ENCODE measurements at regions of chr16 and their contacts with region 1.

Region 1: DNA sequence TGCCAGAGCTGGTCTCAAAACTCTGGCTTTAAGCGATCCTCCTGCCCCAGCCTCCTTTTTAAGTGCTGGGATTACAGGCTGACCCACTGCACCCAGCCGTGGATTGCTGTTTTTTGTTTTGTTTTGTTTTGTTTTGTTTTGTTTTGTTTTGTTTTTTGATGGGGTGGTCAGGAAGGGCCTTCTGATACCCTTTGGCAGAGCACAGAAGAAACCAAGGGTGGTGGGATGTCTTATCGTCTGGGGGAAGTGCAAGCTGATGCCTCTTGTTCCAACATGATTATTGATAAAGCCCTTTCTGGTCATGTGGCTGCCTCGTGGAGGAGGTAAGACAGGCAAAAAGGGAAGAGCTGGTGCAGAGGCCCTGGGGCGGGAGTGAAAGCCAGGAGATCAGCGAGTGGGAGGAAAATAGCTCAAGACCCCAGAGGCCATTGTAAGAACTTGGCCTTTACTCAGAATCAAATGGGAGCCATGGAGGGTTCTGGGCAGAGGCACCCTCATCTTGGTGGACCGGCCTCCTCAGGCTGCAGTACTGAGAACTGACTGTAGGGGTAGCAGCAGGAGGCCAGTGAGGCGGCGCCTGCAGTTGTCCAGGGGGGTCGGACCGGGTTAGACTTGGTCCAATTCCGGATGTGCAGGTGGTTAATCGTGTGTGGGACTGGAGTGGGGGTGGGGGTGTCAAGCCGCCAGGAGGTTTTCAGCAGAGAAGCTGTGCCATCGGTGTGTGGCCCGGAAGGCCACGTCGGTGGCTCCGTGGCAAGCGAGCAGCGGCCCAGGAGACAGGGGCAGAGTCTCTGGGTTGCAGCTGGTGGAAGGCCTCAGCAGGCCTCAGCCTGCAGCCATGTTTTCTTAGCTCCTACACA is 84.4 kb upstream of the GSE1 start:
- DNase-seq: peak in 2 of 3 donors; percentile 40 to 53
- H3K4me3 ChIP-seq: no peak overlapping the region
- H3K27ac ChIP-seq: peak overlapping the region in 1 of 2 experiments; percentile 34
- H3K4me1 ChIP-seq: peaks cover 0 to 41% (median 20%) of the 10 kb centered on the region in 4 experiments
- H3K27me3 ChIP-seq: no peaks in the 10 kb centered on the region

Region 2: GRCh38 chr16:85469929-85470590 is 58.7 kb before region 1 on chr16:
- CTCF ChIA-PET with region 1: no interaction called
- POLR2A ChIA-PET with region 1: no interaction called
- DNase-seq: no peak
- H3K4me3 ChIP-seq: no peak overlapping the region
- H3K27ac ChIP-seq: no peak overlapping the region
- H3K4me1 ChIP-seq: peaks cover 0 to 33% (median 15%) of the 10 kb centered on the region in 4 experiments
- H3K27me3 ChIP-seq: no peaks in the 10 kb centered on the region

Region 3: DNA sequence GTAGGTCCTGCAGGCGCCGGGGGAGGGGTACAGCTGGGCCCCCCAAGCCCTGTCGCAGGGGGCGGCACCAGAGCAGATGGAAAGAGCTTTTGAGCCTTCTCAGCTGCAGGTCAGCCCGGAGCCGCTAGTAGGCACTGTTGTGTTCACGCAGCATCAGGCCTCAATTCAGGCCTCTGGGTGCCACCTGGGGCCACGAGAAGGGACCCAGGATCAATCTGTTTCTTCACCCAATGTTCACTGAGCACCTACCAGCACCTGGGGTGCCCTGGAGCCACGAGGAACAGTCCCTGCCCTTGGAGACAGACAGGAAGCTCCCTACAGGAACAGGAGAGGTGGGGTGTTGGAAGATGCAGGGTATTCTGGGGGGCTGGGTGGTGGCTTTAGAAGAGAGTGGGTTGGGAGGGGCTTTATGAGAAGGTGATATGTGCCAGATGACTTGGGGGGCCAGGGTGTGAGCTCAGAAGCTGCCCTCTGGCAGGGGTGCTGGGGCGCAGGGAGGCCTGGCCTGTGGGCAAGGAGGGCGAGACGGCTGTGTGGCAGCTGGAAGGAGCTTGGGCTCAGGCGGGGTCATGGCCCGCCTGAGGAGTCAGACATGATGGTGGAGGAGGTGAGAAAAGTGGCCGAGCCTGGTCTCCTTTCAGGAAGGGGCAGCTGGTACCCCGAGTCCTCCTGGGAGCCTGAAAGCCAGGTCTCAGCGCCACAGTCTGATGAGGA is 37.5 kb before region 1 on chr16:
- CTCF ChIA-PET with region 1: interaction called, 26 read pairs
- POLR2A ChIA-PET with region 1: no interaction called
- DNase-seq: peak; percentile 33 to 55 (median 34)
- H3K4me3 ChIP-seq: no peak overlapping the region
- H3K27ac ChIP-seq: no peak overlapping the region
- H3K4me1 ChIP-seq: peaks cover 0 to 37% (median 16%) of the 10 kb centered on the region in 4 experiments
- H3K27me3 ChIP-seq: no peaks in the 10 kb centered on the region

Region 4: GRCh38 chr16:85514595-85515318 is 14.0 kb before region 1 on chr16:
- CTCF ChIA-PET with region 1: interaction called, 12 read pairs
- POLR2A ChIA-PET with region 1: interaction called, 3 read pairs
- DNase-seq: no peak
- H3K4me3 ChIP-seq: no peak overlapping the region
- H3K27ac ChIP-seq: no peak overlapping the region
- H3K4me1 ChIP-seq: peaks cover 0 to 3% (median 1%) of the 10 kb centered on the region in 4 experiments
- H3K27me3 ChIP-seq: no peaks in the 10 kb centered on the region

Region 5: GRCh38 chr16:85541980-85542900 is 13.5 kb after region 1 on chr16:
- CTCF ChIA-PET with region 1: interaction called, 35 read pairs
- POLR2A ChIA-PET with region 1: no interaction called
- DNase-seq: no peak
- H3K4me3 ChIP-seq: peak overlapping the region in 1 of 7 experiments; percentile 10
- H3K27ac ChIP-seq: no peak overlapping the region
- H3K4me1 ChIP-seq: peaks cover 13 to 53% (median 43%) of the 10 kb centered on the region in 4 experiments
- H3K27me3 ChIP-seq: no peaks in the 10 kb centered on the region

Region 6: GRCh38 chr16:85564277-85565051 is 35.7 kb after region 1 on chr16:
- CTCF ChIA-PET with region 1: interaction called, 23 read pairs
- POLR2A ChIA-PET with region 1: no interaction called
- DNase-seq: peak; percentile 63 to 72 (median 68)
- H3K4me3 ChIP-seq: no peak overlapping the region
- H3K27ac ChIP-seq: no peak overlapping the region
- H3K4me1 ChIP-seq: peaks cover 0 to 88% (median 81%) of the 10 kb centered on the region in 4 experiments
- H3K27me3 ChIP-seq: no peaks in the 10 kb centered on the region

Region 7: DNA sequence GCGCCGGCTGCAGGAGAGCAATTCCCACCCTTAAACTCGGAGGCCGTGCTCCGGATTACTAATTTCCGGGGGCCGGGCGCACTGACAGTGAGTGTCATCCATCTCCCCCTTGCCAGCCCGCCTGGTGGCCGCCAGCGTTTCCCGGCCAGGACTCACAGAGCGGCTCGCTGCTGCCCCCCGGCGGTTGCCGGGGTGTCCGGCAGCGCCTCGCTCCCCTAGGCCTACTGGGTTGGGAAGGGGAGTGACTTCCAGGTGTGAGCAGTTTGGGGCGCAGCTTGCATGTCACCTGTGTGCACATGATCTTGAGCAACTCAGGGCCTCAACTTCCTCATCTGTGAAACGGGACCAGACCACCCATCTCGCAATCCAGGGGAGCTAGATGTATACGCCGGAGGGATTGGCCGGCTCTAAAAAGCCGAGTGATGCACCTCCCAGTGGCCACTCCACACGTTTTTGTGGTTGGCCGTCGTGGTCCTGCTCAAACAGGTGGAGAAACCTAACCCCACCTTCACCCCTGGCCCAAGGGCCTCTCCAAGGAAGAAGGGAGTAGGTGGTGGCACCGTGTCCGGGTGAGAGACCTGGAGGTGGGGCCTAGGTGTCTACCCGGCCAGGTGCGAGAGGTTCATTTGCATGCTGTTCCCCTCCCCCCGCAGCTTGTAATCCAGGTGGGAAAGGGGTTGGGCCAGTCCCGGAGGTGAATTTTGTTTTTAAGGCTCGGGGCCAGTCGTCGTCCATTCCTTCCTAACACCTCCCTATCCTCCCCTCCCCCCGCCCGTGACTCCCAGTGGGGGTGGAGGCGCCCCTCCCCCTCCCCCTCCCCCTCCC is 82.0 kb after region 1 on chr16:
- CTCF ChIA-PET with region 1: interaction called, 13 read pairs
- POLR2A ChIA-PET with region 1: no interaction called
- DNase-seq: peak; percentile 84 to 88 (median 86)
- H3K4me3 ChIP-seq: peak overlapping the region in 5 of 7 experiments; percentile 36 to 85 (median 65)
- H3K27ac ChIP-seq: peak overlapping the region; percentile 23 to 71
- H3K4me1 ChIP-seq: peaks cover 3 to 73% (median 60%) of the 10 kb centered on the region in 4 experiments
- H3K27me3 ChIP-seq: no peaks in the 10 kb centered on the region

Region 8: DNA sequence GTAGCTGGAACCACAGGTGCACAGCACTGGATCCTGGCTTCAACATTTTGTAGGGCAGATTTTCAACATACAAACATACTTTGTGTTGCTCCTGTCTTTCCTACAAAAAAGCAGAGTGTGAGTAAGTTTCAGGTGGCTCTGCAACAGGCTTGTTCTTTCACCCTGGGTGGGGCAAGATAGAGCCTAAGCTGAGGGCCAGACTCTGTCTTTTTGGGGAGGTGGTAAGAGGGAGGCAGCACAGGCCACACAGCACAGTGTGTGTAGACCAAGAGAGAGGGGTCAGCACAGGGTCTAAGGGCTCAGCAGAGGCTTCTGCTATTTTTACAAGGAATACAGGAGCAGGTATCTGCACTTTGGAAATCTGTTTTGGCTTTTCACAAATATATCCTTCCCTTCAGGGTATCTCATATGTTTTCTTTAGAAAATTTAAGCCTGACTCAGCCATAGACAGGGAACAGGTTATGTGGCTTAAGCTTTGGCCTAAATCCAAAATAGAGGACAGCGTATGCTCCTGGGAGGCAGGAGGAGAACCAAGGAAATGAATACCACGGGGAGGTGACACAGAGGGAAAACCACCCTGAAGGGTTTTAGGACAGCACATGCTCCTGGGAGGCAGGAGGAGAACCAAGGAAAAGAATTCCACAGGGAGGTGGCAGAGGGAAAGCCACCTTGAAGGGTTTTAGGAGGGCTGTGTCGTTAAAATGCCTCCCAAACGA is 249.0 kb after region 1 on chr16:
- CTCF ChIA-PET with region 1: no interaction called
- POLR2A ChIA-PET with region 1: no interaction called
- DNase-seq: no peak
- H3K4me3 ChIP-seq: no peak overlapping the region
- H3K27ac ChIP-seq: peak overlapping the region in 1 of 2 experiments; percentile 20
- H3K4me1 ChIP-seq: no peaks in the 10 kb centered on the region
- H3K27me3 ChIP-seq: no peaks in the 10 kb centered on the region